ENCODE measurements at regions of chr2 and their contacts with region 1.

Region 1: GRCh38 chr2:48332286-48332685 is 197.7 kb upstream of the STON1 start:
- DNase-seq: no peak
- ATAC-seq: no peak
- H3K4me3 Mint-ChIP-seq: no peak overlapping the region
- H3K27ac Mint-ChIP-seq: no peak overlapping the region
- H3K4me1 Mint-ChIP-seq: peaks cover 36% of the 10 kb centered on the region
- H3K27me3 Mint-ChIP-seq: no peaks in the 10 kb centered on the region

Region 2: GRCh38 chr2:48292393-48292792 is 39.9 kb before region 1 on chr2:
- CTCF ChIA-PET with region 1: no interaction called
- POLR2A ChIA-PET with region 1: no interaction called
- DNase-seq: no peak
- ATAC-seq: no peak
- H3K4me3 Mint-ChIP-seq: no peak overlapping the region
- H3K27ac Mint-ChIP-seq: peak overlapping the region; percentile 54
- H3K4me1 Mint-ChIP-seq: peaks cover 19% of the 10 kb centered on the region
- H3K27me3 Mint-ChIP-seq: peaks cover 2% of the 10 kb centered on the region

Region 3: DNA sequence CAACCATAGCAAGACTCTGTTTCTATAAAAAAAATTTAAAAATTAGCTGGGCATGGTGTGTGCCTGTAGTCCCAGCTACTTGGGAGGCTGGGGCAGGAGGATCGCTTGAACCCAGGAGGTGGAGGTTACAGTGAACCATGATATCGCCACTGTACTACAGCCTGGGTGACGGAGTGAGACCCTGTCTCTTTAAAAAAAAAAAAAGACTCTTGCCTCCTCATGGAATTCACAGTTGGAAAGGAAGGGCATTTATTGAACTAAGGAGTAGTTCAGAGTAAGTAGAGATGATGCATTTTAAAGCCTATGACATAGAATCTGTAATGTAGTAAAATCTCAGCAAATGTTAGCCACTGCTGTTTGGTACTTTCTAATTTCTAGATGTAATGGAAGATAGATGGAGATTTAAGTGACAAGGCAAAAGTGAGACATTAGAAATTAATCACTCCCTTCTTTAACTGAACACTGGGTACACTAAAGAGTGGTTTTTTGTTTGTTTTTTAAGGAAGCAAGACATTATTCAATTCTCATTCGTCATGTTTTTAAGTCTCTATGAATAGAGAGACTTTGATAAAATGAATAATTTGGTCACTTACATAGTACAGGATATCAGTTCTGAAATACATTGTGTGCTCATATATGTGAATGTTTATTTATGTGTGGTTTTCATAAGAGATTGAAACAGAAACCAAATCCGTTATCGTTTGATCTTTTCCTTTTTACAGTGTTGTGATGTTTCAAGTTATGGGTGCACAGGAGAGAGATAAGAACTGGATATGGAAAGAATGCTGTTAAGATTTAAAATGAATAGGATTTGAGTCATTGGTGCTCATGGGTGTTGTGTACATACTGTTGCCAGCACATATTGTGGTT is 11.5 kb after region 1 on chr2:
- CTCF ChIA-PET with region 1: interaction called, 18 read pairs
- POLR2A ChIA-PET with region 1: no interaction called
- DNase-seq: no peak
- ATAC-seq: peak; percentile 93
- H3K4me3 Mint-ChIP-seq: peak overlapping the region; percentile 45
- H3K27ac Mint-ChIP-seq: peak overlapping the region; percentile 65
- H3K4me1 Mint-ChIP-seq: peaks cover 51% of the 10 kb centered on the region
- H3K27me3 Mint-ChIP-seq: no peaks in the 10 kb centered on the region